ENCODE measurements at regions of chr6 and their contacts with region 1.

Region 1: DNA sequence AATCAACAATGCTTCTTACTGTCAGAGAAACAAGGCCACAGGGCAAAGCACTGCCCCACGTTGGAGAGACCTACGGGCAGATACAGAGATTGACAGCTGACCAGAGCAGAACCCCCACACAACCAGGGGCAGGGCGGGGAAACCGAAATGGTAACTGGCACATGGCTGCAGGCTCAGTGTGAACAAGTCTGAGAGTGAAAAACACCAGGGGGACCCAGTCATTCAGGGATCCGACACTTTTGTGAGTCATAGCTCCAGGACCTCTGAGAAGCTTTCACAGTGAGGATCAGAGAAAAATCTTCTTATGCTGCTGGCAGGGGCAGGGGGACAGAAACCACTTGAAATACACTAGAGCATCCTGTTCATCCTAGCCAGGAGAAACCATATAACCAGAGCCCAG is 254.2 kb downstream of the C6orf118 start:
- DNase-seq: no peak
- ATAC-seq: no peak
- H3K4me3 ChIP-seq: no peak overlapping the region
- H3K27ac ChIP-seq: no peak overlapping the region
- H3K4me1 ChIP-seq: no peaks in the 10 kb centered on the region
- H3K27me3 ChIP-seq: no peaks in the 10 kb centered on the region
- CTCF ChIP-seq: no peak
- POLR2A ChIP-seq: no peak
- RAD21 ChIP-seq: no peak

Region 2: DNA sequence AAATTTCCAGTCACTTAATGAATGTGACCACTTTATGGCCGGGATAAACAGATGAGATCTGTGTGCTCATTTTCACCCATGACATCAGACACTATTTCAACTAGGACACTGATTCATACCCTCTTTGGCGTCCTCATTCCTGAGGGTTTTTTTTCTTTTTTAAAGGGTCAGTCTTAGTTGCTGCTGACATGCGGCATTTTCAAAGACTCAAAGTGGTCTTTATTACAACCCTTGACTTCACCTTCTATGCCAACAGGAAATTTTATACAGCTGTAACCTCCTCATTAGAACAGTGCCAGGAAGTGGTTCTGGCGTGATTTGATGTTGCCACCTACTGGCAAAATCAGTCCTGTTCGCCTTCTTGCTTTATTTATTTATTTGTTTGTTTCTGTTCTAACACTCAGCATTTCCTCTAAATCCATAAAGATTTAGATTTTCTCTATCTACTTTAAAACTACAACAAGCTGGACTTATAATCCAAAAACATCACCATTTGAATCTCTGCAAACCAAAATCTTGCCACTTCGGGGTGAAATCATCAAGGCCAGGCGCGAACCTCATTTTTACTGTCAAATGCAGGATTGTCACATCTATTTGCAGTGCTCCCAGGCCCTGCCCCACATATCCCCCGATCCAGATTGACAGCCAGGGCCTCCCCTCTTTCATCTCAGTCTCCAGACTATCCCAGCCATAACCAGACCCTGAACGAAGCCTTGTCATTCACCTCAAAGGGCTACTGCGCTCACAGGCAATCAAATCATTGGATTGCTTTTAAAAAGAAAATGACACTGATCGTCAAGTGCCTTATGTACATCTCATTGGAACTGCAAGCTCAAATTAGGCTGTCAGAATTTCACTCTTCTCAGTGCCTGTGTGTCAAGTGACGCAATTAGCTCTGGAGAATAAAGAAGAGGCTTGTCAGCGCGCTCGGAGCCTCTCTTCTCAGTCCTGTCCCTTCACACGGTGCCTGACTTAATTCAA is 176.6 kb after region 1 on chr6:
- CTCF ChIA-PET with region 1: no interaction called
- POLR2A ChIA-PET with region 1: no interaction called
- dilution Hi-C with region 1: no loop called
- in situ Hi-C with region 1: no loop called
- intact Hi-C with region 1: loop called (anchors 10 kb)
- DNase-seq: no peak
- ATAC-seq: no peak
- H3K4me3 ChIP-seq: no peak overlapping the region
- H3K27ac ChIP-seq: no peak overlapping the region
- H3K4me1 ChIP-seq: no peaks in the 10 kb centered on the region
- H3K27me3 ChIP-seq: no peaks in the 10 kb centered on the region
- CTCF ChIP-seq: no peak
- POLR2A ChIP-seq: no peak
- RAD21 ChIP-seq: no peak